Naive thymus-derived CD4-positive, alpha-beta T cell (primary cell): ENCODE measurements at regions of chr12 and their contacts with region 1.

Region 1: DNA sequence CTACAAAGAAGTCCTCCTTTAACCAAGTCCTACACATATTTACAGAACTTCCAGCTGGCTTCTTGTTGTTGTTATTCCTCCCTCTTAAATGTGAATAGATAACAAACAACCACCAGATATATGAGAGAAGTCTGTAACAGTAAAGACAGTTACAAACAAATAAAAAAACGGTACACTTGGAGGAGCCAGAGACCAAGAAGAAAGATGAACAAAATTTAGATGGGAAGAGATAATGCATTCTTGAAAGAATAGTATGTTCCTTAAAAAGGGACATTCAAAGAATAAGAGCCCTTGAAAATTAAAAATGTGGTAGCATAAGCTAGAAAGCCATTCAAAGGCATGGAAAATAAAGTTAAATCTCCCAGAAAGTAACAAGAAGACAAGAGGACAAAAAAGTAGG is 25.9 kb downstream of the SLCO1A2 start:
- DNase-seq: no peak
- ATAC-seq: no peak
- H3K4me3 ChIP-seq: no peak overlapping the region
- H3K4me3 Mint-ChIP-seq: no peak overlapping the region
- H3K27ac ChIP-seq: no peak overlapping the region
- H3K27ac Mint-ChIP-seq: no peak overlapping the region
- H3K4me1 ChIP-seq: no peaks in the 10 kb centered on the region
- H3K4me1 Mint-ChIP-seq: peaks cover 0 to 3% (median 0%) of the 10 kb centered on the region in 7 donors
- H3K27me3 ChIP-seq: no peaks in the 10 kb centered on the region
- H3K27me3 Mint-ChIP-seq: peaks cover 1 to 9% (median 5%) of the 10 kb centered on the region in 5 donors

Region 2: DNA sequence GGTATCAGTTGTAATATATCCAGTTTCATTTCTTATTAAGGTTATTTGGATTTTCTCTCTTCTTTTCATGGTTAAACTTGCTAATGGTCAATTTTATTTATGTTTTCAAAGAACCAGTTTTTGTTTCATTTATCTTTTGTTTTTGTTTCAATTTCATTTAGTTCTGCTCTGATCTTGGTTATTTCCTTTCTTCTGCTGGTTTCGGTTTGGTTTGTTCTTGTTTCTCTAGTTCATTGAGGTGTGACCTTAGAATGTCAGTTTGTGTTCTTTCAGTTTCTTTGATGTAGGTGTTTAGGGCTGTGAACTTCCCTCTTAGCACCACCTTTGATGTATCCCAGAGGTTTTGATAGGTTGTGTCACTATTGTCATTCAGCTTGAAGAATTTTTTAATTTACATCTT is 323.4 kb before region 1 on chr12:
- CTCF ChIA-PET with region 1: no interaction called
- POLR2A ChIA-PET with region 1: no interaction called
- intact Hi-C with region 1: no loop called
- DNase-seq: no peak
- ATAC-seq: no peak
- H3K4me3 ChIP-seq: no peak overlapping the region
- H3K4me3 Mint-ChIP-seq: peak overlapping the region in 1 of 10 donors; percentile 12
- H3K27ac ChIP-seq: no peak overlapping the region
- H3K27ac Mint-ChIP-seq: peak overlapping the region in 1 of 9 donors; percentile 3
- H3K4me1 ChIP-seq: no peaks in the 10 kb centered on the region
- H3K4me1 Mint-ChIP-seq: peaks cover 0 to 4% (median 0%) of the 10 kb centered on the region in 7 donors
- H3K27me3 ChIP-seq: no peaks in the 10 kb centered on the region
- H3K27me3 Mint-ChIP-seq: no peaks in the 10 kb centered on the region

Region 3: GRCh38 chr12:21276826-21277225 is 32.0 kb before region 1 on chr12:
- CTCF ChIA-PET with region 1: no interaction called
- POLR2A ChIA-PET with region 1: no interaction called
- intact Hi-C with region 1: no loop called
- DNase-seq: no peak
- ATAC-seq: no peak
- H3K4me3 ChIP-seq: no peak overlapping the region
- H3K4me3 Mint-ChIP-seq: no peak overlapping the region
- H3K27ac ChIP-seq: no peak overlapping the region
- H3K27ac Mint-ChIP-seq: no peak overlapping the region
- H3K4me1 ChIP-seq: no peaks in the 10 kb centered on the region
- H3K4me1 Mint-ChIP-seq: no peaks in the 10 kb centered on the region
- H3K27me3 ChIP-seq: no peaks in the 10 kb centered on the region
- H3K27me3 Mint-ChIP-seq: peaks cover 7 to 54% (median 29%) of the 10 kb centered on the region in 5 donors

Region 4: GRCh38 chr12:21683115-21683514 is 374.3 kb after region 1 on chr12:
- CTCF ChIA-PET with region 1: no interaction called
- POLR2A ChIA-PET with region 1: no interaction called
- intact Hi-C with region 1: loop called in 1 of 2 experiments (anchors 5 kb)
- DNase-seq: no peak
- ATAC-seq: no peak
- H3K4me3 ChIP-seq: no peak overlapping the region
- H3K4me3 Mint-ChIP-seq: no peak overlapping the region
- H3K27ac ChIP-seq: no peak overlapping the region
- H3K27ac Mint-ChIP-seq: peak overlapping the region in 1 of 9 donors; percentile 37
- H3K4me1 ChIP-seq: peaks cover 0 to 24% of the 10 kb centered on the region in 2 donors
- H3K4me1 Mint-ChIP-seq: peaks cover 9 to 25% (median 20%) of the 10 kb centered on the region in 7 donors
- H3K27me3 ChIP-seq: no peaks in the 10 kb centered on the region
- H3K27me3 Mint-ChIP-seq: peaks cover 0 to 8% (median 0%) of the 10 kb centered on the region in 5 donors

Region 5: DNA sequence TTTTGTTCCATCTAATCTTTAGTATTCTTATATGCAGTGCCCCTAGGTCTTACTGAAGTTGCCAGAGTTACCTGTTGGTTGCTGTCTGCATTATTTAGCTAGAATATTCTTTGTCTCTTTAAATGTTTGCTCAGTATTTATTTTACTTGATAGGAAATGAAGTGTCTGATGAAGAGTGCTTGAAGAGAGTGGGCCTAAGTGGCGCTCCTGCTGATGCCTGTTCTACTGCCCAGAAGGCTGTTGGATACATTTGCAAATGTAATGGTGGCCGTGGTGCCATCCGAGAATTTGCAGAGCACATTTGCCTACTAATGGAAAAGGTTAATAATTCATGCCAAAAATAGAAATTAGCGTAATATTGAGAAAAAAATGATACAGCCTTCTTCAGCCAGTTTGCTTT is 756.2 kb after region 1 on chr12:
- CTCF ChIA-PET with region 1: no interaction called
- POLR2A ChIA-PET with region 1: no interaction called
- intact Hi-C with region 1: no loop called
- DNase-seq: no peak
- ATAC-seq: no peak
- H3K4me3 ChIP-seq: no peak overlapping the region
- H3K4me3 Mint-ChIP-seq: no peak overlapping the region
- H3K27ac ChIP-seq: no peak overlapping the region
- H3K27ac Mint-ChIP-seq: peak overlapping the region in 1 of 9 donors; percentile 7
- H3K4me1 ChIP-seq: no peaks in the 10 kb centered on the region
- H3K4me1 Mint-ChIP-seq: peaks cover 0 to 24% (median 11%) of the 10 kb centered on the region in 7 donors
- H3K27me3 ChIP-seq: no peaks in the 10 kb centered on the region
- H3K27me3 Mint-ChIP-seq: no peaks in the 10 kb centered on the region